ENCODE measurements at regions of chr5 and their contacts with region 1.

Region 1: GRCh38 chr5:178461004-178461730 is 129.0 kb downstream of the COL23A1 start:
- DNase-seq: peak; percentile 94
- ATAC-seq: peak; percentile 96
- H3K4me3 Mint-ChIP-seq: no peak overlapping the region
- H3K27ac Mint-ChIP-seq: no peak overlapping the region
- H3K4me1 Mint-ChIP-seq: peaks cover 33% of the 10 kb centered on the region
- H3K27me3 Mint-ChIP-seq: no peaks in the 10 kb centered on the region
- CTCF ChIP-seq: peak; percentile 92

Region 2: DNA sequence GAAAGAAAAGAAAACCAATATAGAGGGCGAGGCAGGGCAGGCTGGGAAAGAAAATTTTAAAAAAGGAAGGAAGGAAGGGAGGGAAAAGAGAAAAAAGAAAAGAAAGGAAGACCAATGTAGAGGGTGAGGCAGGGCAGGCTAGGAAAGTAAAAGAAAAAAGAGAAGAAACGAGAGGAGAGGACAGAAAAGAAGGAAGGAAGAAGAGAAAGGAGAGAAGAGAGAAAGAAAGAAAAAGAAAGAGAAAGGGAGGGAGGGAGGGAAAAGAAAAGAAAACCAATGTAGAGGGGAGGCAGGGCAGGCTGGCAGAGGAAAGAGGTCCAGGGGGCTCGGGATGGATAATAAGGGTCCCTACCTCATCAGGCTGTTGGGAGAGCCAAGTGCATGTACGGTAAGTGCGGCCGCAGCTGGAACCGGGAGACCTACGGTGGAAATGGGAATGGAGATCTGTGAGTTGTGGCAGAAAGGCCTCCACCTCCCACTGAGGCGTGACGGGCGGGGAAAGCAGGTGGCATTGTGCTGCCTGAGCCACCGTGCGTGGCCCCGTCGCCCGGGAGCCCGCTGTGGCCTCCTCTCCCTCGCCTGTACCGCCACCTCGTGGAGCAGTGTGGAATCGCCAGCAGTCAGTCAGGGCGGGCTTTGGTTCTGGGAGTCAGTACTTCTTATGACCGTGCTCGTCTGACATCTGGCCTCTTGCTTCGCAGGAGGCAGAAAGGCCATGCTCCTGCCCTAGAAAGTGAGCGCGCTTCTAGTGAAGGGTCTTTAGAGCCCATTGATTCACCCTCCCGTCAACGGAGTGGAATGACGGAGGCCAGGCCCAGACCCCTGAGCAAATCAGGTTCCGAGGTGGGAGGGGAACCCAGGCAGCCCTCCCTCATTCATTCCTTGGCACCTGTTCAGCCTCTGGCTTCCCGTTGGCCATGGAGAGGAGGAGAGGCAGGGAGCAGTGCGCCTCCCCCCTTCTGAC is 297.1 kb before region 1 on chr5:
- CTCF ChIA-PET with region 1: no interaction called
- POLR2A ChIA-PET with region 1: no interaction called
- DNase-seq: peak; percentile 97
- ATAC-seq: peak; percentile 90
- H3K4me3 Mint-ChIP-seq: peak overlapping the region; percentile 62
- H3K27ac Mint-ChIP-seq: peak overlapping the region; percentile 10
- H3K4me1 Mint-ChIP-seq: peaks cover 10% of the 10 kb centered on the region
- H3K27me3 Mint-ChIP-seq: peaks cover 20% of the 10 kb centered on the region
- CTCF ChIP-seq: peak; percentile 94

Region 3: DNA sequence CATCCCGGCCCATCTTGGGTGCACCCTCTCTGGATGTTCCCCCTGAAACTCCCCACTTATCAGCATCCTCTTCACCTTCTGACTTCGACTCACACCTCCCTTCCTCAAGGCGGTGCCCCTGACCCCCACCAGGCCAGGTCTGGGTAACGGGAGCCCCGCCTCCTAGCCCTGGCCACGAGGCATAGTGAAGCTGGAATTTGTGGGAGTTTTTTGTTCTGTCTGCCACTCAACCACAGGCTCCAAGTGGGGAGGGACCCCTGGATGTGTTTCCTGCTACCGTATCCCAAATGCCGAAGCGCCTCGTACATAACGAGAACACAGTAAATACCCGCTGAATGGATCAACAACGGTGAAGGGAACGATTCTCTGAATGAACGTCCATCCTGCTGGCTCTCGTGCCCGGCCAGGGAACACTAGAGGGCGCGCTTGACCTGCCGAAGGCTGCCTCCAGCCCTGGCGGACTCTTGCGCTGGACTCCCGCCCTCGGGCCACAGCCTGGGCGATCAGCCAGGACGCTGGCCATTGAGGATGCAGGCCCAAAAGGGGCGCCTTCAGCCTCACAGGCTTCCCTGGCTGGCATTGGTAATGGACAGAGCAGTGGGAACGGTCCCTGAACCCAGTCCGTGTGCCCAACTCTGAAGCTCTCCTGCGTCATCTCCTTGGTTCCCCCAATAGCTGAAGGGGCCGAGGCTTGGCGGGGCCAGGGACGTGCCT is 181.3 kb before region 1 on chr5:
- CTCF ChIA-PET with region 1: interaction called, 33 read pairs
- POLR2A ChIA-PET with region 1: no interaction called
- DNase-seq: peak; percentile 95
- ATAC-seq: peak; percentile 91
- H3K4me3 Mint-ChIP-seq: peak overlapping the region; percentile 41
- H3K27ac Mint-ChIP-seq: peak overlapping the region; percentile 63; the same call in 1 of the 2 replicates
- H3K4me1 Mint-ChIP-seq: peaks cover 4% of the 10 kb centered on the region
- H3K27me3 Mint-ChIP-seq: peaks cover 8% of the 10 kb centered on the region
- CTCF ChIP-seq: peak; percentile 74

Region 4: GRCh38 chr5:178416919-178417318 is 44.2 kb before region 1 on chr5:
- CTCF ChIA-PET with region 1: interaction called, 17 read pairs
- POLR2A ChIA-PET with region 1: no interaction called
- DNase-seq: no peak
- ATAC-seq: no peak
- H3K4me3 Mint-ChIP-seq: no peak overlapping the region
- H3K27ac Mint-ChIP-seq: peak overlapping the region; percentile 20; the same call in 1 of the 2 replicates
- H3K4me1 Mint-ChIP-seq: peaks cover 44% of the 10 kb centered on the region
- H3K27me3 Mint-ChIP-seq: no peaks in the 10 kb centered on the region
- CTCF ChIP-seq: no peak

Region 5: GRCh38 chr5:178442405-178443257 is 18.5 kb before region 1 on chr5:
- CTCF ChIA-PET with region 1: interaction called, 36 read pairs
- POLR2A ChIA-PET with region 1: no interaction called
- DNase-seq: no peak
- ATAC-seq: no peak
- H3K4me3 Mint-ChIP-seq: no peak overlapping the region
- H3K27ac Mint-ChIP-seq: no peak overlapping the region
- H3K4me1 Mint-ChIP-seq: no peaks in the 10 kb centered on the region
- H3K27me3 Mint-ChIP-seq: no peaks in the 10 kb centered on the region
- CTCF ChIP-seq: no peak

Region 6: DNA sequence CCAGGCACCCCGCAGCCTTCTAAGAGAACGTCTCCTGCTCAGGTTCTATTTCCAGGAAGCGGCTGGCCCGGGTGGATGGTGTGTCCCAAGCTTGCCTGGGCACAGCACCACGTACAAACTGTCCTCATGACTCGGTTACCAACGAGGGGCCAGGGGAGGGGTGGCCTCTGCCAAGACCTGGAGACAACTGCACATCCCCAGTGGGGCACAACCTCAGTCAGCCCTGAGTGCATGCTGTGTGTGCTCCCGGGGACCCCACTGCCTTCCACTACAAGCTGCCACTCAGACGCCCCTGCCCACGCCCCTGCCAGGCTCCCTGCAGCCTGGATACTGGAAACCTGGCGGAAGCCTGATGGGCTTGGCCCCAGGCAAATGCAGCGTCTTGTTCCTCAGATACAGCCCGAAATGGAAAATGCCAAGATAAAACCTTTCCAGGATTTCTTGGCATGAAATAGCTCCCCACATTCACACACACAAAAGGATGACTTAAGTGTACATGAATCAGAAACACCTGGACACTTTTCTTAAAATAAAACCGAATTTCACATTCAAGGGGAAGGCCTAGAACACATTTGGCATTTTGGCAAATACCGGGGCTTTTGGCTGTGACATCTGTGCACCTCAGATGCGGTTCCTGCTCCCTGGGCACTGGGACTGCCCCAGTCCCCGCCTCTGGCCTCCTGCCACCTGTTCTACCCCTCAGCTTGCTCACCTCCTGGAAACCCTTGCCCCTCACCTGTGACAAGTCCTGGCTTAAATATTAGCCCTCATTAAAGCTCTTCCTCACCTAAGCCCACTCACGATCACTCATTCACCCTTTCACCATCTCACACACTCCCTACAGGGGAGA is 66.5 kb after region 1 on chr5:
- CTCF ChIA-PET with region 1: interaction called, 15 read pairs
- POLR2A ChIA-PET with region 1: no interaction called
- DNase-seq: no peak
- ATAC-seq: no peak
- H3K4me3 Mint-ChIP-seq: no peak overlapping the region
- H3K27ac Mint-ChIP-seq: no peak overlapping the region
- H3K4me1 Mint-ChIP-seq: peaks cover 29% of the 10 kb centered on the region
- H3K27me3 Mint-ChIP-seq: no peaks in the 10 kb centered on the region
- CTCF ChIP-seq: no peak

Region 7: GRCh38 chr5:178576591-178577351 is 115.6 kb after region 1 on chr5:
- CTCF ChIA-PET with region 1: interaction called, 11 read pairs
- POLR2A ChIA-PET with region 1: no interaction called
- DNase-seq: peak; percentile 57
- ATAC-seq: peak; percentile 55
- H3K4me3 Mint-ChIP-seq: peak overlapping the region; percentile 87
- H3K27ac Mint-ChIP-seq: no peak overlapping the region
- H3K4me1 Mint-ChIP-seq: peaks cover 17% of the 10 kb centered on the region
- H3K27me3 Mint-ChIP-seq: peaks cover 21% of the 10 kb centered on the region
- CTCF ChIP-seq: no peak

Region 8: DNA sequence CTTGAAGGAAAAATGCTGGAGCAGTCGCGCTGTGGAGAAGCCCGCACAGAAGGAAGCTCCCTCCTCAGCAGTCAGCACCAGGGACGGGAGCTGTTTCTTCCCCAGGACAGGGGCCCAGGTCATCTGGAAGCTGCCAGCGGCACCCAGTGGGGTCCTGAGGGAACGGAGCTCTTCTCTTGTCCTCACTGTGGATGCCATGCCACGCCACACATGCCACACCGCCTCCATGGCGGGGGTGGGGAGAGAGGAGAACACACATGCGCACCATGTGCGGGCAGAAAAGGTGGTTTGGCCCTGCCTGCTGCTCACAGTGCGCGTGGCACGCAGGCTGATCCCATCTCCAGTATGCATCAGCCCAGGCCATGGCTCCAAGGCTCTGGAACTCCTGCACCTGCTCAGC is 356.9 kb after region 1 on chr5:
- CTCF ChIA-PET with region 1: no interaction called
- POLR2A ChIA-PET with region 1: no interaction called
- DNase-seq: no peak
- ATAC-seq: peak; percentile 38; the same call in 1 of the 2 replicates
- H3K4me3 Mint-ChIP-seq: no peak overlapping the region
- H3K27ac Mint-ChIP-seq: no peak overlapping the region
- H3K4me1 Mint-ChIP-seq: peaks cover 12% of the 10 kb centered on the region
- H3K27me3 Mint-ChIP-seq: no peaks in the 10 kb centered on the region
- CTCF ChIP-seq: no peak

Measured in WTC11 (cell line).